ENCODE measurements at regions of chr11 and their contacts with region 1.

Region 1: DNA sequence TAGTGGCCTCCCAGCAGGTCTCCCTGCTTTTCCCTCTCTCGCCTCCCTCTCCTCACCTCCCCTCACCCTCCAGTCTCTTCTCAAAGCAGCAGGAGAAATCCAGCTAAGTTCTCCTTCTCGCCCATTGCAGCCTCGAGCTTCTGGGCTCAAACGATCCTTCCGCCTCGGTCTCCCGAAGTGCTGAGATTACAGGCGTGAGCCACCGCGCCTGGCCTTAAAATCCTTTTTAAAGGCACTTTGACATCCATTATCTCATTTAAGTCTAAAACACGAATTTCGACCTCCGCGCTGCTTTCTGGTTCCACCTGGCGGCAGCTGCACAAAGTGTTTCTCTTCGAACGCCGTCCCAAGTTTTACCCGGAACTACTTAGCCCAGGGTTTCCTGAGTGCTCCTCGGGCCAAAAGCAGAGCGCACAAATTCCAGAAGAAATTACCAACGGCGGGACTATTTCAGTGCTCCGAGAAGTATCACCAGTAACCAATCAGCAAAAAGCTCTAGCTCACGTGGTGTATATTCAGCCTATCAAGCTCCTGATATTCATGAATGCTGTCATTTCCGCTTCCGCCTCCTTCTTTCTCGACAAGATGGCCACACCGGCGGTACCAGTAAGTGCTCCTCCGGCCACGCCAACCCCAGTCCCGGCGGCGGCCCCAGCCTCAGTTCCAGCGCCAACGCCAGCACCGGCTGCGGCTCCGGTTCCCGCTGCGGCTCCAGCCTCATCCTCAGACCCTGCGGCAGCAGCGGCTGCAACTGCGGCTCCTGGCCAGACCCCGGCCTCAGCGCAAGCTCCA is at the start of gene EIF3F:
- DNase-seq: peak; percentile 81 to 92 (median 88)
- H3K4me3 ChIP-seq: peak within 1 kb of the TSS; percentile 87
- H3K27ac ChIP-seq: peak within 1 kb of the TSS in 1 of 2 donors; percentile 64
- H3K4me1 ChIP-seq: peaks cover 6% of the 10 kb centered on the region
- H3K27me3 ChIP-seq: no peaks in the 10 kb centered on the region
- CTCF ChIP-seq: peak; percentile 81 to 86 (median 85)
- EP300 ChIP-seq: no peak
- POLR2A ChIP-seq: no peak
- total RNA-seq, gene EIF3F: 235 to 459 (median 309) TPM

Region 2: DNA sequence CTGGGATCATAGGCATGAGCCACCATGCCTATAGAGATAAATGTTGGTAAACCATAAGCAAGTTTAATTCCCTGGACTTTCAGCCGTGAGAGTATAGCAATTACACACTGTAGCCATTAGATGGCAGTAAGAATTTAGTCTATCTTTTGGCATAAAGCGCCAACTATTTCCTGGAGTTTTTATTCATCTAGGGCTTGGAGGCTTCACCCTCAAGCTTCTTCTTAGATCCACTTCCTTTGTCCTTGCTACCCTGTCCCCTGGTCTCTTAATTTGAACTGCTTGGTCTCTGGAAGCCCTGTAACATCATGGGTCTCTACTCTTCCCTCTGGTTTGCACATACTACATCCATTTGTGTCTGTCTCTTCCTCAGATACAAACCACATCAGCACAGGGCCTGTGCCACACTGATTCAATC is 94.1 kb before region 1 on chr11:
- intact Hi-C with region 1: loop called in 2 of 4 experiments (anchors 5 kb)
- DNase-seq: no peak
- H3K4me3 ChIP-seq: no peak overlapping the region
- H3K27ac ChIP-seq: no peak overlapping the region
- H3K4me1 ChIP-seq: no peaks in the 10 kb centered on the region
- H3K27me3 ChIP-seq: no peaks in the 10 kb centered on the region
- CTCF ChIP-seq: peak in 1 of 3 donors; percentile 38
- EP300 ChIP-seq: no peak
- POLR2A ChIP-seq: no peak

Region 3: GRCh38 chr11:8092587-8093424 is 105.8 kb after region 1 on chr11:
- intact Hi-C with region 1: no loop called
- DNase-seq: peak in 4 of 5 donors; percentile 65 to 73 (median 67)
- H3K4me3 ChIP-seq: no peak overlapping the region
- H3K27ac ChIP-seq: no peak overlapping the region
- H3K4me1 ChIP-seq: no peaks in the 10 kb centered on the region
- H3K27me3 ChIP-seq: no peaks in the 10 kb centered on the region
- CTCF ChIP-seq: peak in 2 of 3 donors; percentile 38 to 49
- EP300 ChIP-seq: no peak
- POLR2A ChIP-seq: no peak

Measured in ovary (tissue), 10 donors.